B cell (primary cell): ENCODE measurements at regions of chr11 and their contacts with region 1.

Region 1: GRCh38 chr11:13210424-13210823 is 67.2 kb upstream of the BMAL1 start:
- DNase-seq: peak; percentile 30
- ATAC-seq: no peak
- H3K4me3 ChIP-seq: no peak overlapping the region
- H3K4me3 Mint-ChIP-seq: no peak overlapping the region
- H3K27ac ChIP-seq: no peak overlapping the region
- H3K27ac Mint-ChIP-seq: no peak overlapping the region
- H3K4me1 ChIP-seq: peaks cover 0 to 5% of the 10 kb centered on the region in 2 donors
- H3K4me1 Mint-ChIP-seq: peaks cover 13% of the 10 kb centered on the region
- H3K27me3 ChIP-seq: peaks cover 0 to 5% (median 0%) of the 10 kb centered on the region in 4 experiments
- H3K27me3 Mint-ChIP-seq: peaks cover 26% of the 10 kb centered on the region
- CTCF ChIP-seq: peak; percentile 24

Region 2: DNA sequence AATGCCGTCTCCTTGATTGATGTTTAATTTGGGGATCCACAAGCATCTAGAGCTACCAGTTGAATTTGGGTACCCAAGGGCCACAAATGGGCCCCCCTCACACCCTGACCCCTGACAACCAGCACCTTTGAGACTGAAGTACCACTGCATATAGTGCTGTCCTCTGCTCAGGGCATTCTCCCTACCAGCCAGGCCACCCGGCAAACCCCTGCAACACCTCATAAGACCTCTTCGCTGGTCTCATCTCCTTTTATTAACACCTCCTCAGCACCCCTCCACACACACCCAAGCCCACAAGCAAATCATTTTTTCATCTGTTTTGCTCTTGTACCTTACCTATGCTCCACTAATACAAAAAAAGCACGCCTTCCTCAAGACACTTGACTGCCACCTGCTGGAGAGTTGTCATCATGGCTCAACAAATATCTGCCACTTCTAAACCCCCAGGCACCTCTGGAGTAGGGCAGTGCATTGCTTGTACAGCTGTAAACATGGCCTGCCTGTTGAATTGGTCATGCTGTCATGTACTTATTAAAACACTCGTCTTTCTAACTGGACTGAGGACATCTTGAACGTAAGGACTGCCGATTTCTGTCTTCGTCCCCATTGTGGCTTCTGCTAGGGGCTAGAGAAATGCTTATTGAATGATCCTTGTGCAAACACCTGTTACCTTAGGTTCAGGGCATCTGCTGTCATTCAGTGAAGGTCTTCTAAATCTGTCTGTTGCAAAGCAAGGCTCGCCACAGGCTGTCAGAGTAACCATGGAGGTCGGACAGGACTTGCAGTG is 133.7 kb after region 1 on chr11:
- CTCF ChIA-PET with region 1: interaction called, 11 read pairs
- POLR2A ChIA-PET with region 1: no interaction called
- intact Hi-C with region 1: loop called (anchors 1 kb)
- DNase-seq: peak; percentile 72
- ATAC-seq: peak; percentile 63
- H3K4me3 ChIP-seq: no peak overlapping the region
- H3K4me3 Mint-ChIP-seq: no peak overlapping the region
- H3K27ac ChIP-seq: no peak overlapping the region
- H3K27ac Mint-ChIP-seq: no peak overlapping the region
- H3K4me1 ChIP-seq: peaks cover 7 to 14% of the 10 kb centered on the region in 2 donors
- H3K4me1 Mint-ChIP-seq: peaks cover 49% of the 10 kb centered on the region
- H3K27me3 ChIP-seq: no peaks in the 10 kb centered on the region
- H3K27me3 Mint-ChIP-seq: no peaks in the 10 kb centered on the region
- CTCF ChIP-seq: peak; percentile 89

Region 3: DNA sequence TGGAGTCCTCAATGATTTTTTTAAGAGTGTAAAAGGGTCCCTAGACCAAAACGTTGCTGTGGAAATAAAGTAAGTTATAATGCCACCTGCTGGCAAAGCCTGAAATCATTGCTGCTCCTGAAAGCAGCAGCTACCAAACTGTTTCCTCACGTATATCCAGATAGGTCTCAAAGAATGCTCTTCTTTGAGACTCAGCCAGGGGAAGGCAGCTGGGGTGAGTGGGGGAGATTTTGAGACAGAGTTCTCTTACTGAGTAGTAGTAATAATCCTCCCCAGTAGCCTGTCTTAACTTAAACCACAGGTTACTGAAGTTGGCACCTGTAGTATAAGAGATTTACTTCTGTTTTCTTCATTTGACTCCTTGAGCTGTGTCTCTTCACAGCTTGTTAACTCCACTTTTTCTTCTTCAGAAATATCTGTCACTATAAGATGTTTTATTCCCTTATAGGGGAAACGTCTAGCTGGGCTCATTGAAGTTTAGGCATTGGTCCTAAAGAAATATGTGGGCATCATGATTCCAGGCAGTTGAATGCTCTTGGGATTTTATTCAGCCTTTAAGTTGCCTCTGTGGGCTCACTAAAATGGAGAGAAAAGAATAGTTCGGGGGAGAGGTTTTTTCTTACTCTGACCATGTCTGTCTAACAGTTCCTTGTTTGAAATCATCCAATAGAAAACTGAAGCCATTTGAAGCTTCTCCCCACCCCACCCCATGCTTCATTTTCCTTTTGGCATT is 174.7 kb after region 1 on chr11:
- CTCF ChIA-PET with region 1: interaction called, 5 read pairs
- POLR2A ChIA-PET with region 1: no interaction called
- intact Hi-C with region 1: loop called (anchors 2 kb)
- DNase-seq: peak; percentile 38
- ATAC-seq: no peak
- H3K4me3 ChIP-seq: no peak overlapping the region
- H3K4me3 Mint-ChIP-seq: no peak overlapping the region
- H3K27ac ChIP-seq: no peak overlapping the region
- H3K27ac Mint-ChIP-seq: peak overlapping the region; percentile 38
- H3K4me1 ChIP-seq: no peaks in the 10 kb centered on the region
- H3K4me1 Mint-ChIP-seq: no peaks in the 10 kb centered on the region
- H3K27me3 ChIP-seq: no peaks in the 10 kb centered on the region
- H3K27me3 Mint-ChIP-seq: no peaks in the 10 kb centered on the region
- CTCF ChIP-seq: peak; percentile 68